GM13976 (cell line): ENCODE measurements at regions of chr2 and their contacts with region 1.

Region 1: DNA sequence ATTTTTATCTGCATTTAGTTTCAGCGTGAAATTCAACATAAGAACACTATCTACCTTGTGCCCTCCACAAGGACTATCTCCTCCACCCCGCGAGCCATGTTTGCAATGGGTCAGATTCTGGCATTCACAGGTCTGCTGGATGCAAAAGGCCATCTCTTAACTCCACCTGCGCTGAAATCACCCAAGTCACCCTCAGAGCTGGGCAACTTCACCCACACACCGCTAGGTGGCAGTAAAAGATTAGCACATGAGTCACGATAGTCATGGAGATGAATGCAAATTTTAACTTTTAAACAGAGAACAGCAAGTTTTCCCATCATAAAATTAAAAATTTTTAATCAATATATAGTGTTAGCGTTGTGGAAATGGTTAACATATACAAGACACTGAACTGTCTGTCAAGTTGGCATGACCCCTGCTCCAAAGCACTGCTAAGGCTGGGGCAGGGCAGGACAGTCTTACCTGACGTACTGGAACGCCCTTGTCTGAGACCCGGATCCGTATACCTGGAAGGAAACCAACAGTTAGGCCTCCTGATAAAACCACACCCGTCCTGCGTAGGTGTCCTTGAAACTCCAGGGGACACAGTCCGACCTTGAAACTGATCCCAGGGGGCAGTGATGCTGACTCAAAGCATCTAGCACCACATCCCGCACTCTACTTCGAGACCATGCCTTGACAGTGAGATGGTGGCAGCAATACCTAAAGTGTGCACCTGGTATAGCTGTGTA is 89.6 kb downstream of the UXS1 start:
- DNase-seq: peak; percentile 82
- CTCF ChIP-seq: peak; percentile 86

Region 2: DNA sequence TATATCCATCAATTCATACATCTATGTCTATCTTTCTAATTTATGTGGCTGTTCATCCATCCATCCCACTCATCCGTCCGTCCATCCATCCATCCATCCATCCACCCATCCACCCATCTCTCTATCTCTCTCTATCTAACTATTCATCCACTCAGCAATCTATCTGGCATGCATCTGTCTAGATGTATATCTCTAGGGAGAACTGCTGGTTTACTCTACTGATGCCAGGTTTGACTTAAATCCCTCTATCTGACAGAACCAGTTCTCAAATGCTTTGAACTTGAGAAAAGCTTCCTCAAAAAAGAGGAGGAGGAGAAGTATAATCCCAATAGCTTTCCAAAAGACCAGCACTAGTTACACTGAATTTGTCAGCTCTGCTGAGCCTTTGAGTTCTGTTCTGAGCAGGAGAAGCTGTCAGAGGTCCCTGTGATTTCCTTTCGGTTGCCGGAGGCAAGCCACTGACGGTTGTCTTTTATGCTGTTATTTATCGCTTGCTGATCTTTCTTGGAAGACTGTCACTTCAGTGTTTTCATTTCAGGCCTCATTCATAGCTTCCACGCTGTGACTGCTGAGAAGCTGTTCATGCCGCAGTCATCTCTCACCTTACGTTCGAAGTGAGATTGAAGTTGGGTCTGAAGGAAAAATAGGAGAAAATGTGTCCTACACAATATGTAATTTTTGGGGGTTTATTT is 219.0 kb after region 1 on chr2:
- in situ Hi-C with region 1: no loop called
- DNase-seq: no peak
- CTCF ChIP-seq: no peak

Region 3: GRCh38 chr2:106542811-106543259 is 438.3 kb after region 1 on chr2:
- in situ Hi-C with region 1: loop called (anchors 25 kb)
- DNase-seq: peak; percentile 79
- CTCF ChIP-seq: peak; percentile 84